ENCODE measurements at regions of chr22 and their contacts with region 1.

Region 1: GRCh38 chr22:46542011-46542985 is 4.9 kb upstream of the CELSR1 start:
- DNase-seq: peak; percentile 72 to 81 (median 76)
- ATAC-seq: peak; percentile 90
- H3K4me3 ChIP-seq: no peak overlapping the region
- H3K27ac ChIP-seq: no peak overlapping the region
- H3K4me1 ChIP-seq: peaks cover 29% of the 10 kb centered on the region
- H3K27me3 ChIP-seq: peaks cover 0 to 11% of the 10 kb centered on the region in 2 donors
- CTCF ChIP-seq: peak; percentile 87 to 92 (median 89)
- POLR2A ChIP-seq: no peak

Region 2: GRCh38 chr22:45994491-45995404 is 547.5 kb before region 1 on chr22:
- intact Hi-C with region 1: loop called (anchors 10 kb)
- DNase-seq: peak; percentile 82 to 87 (median 84)
- ATAC-seq: peak; percentile 73
- H3K4me3 ChIP-seq: no peak overlapping the region
- H3K27ac ChIP-seq: no peak overlapping the region
- H3K4me1 ChIP-seq: peaks cover 24% of the 10 kb centered on the region
- H3K27me3 ChIP-seq: no peaks in the 10 kb centered on the region
- CTCF ChIP-seq: peak; percentile 94 to 97 (median 95)
- POLR2A ChIP-seq: no peak

Region 3: DNA sequence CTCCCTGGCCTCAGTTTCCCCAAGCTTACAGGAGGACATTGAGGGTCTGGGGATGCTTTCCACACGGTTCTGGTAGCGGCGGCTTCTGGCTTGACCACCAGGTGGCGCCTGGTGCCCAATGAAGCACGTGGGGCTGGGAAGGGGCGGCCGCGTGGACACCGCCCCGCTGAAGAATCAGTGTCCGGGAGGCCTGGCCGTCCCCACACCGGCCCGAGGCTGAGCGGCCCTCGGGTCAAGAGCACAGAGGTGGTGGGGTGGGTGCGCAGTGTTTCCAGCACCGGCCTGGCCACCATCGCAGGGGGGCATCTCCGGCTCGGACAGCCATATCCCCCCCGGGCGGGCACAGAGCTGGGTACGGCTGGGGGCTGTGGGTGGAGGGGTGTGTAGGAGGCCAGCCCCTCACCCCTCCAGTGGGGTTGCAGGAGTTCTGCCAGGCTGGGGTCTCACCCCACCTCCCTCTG is 419.8 kb before region 1 on chr22:
- intact Hi-C with region 1: loop called (anchors 10 kb)
- DNase-seq: peak; percentile 71 to 80 (median 77)
- ATAC-seq: peak; percentile 63
- H3K4me3 ChIP-seq: no peak overlapping the region
- H3K27ac ChIP-seq: no peak overlapping the region
- H3K4me1 ChIP-seq: peaks cover 10% of the 10 kb centered on the region
- H3K27me3 ChIP-seq: no peaks in the 10 kb centered on the region
- CTCF ChIP-seq: peak; percentile 84 to 95 (median 90)
- POLR2A ChIP-seq: no peak

Region 4: DNA sequence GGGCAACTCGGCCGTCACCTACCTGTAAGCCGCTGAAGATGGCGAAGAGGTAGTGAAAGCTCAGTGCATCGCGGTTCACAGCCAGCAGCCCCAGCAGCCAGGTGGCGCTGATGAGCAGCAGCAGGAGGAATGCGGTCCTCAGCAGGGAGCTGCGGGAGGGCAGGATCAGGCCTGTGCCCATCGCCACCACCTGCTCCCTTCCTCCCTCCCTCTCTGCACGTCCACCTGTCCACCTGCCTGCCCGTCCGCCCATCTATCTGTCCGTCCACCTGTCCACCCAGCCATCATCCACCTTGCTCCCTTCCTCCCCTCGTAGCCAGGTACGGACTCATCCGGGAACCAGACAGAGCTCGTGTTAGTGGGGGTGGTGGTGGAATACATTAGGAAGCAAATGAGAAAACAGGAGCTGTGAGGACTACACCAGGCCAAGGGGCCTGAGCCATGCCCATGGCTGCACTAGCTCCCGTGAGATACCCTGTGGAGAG is 174.5 kb before region 1 on chr22:
- intact Hi-C with region 1: loop called (anchors 5 kb)
- DNase-seq: peak; percentile 83 to 90 (median 88)
- ATAC-seq: peak; percentile 89
- H3K4me3 ChIP-seq: no peak overlapping the region
- H3K27ac ChIP-seq: no peak overlapping the region
- H3K4me1 ChIP-seq: peaks cover 14% of the 10 kb centered on the region
- H3K27me3 ChIP-seq: no peaks in the 10 kb centered on the region
- CTCF ChIP-seq: peak; percentile 83 to 98 (median 95)
- POLR2A ChIP-seq: no peak

Region 5: GRCh38 chr22:46390652-46391301 is 151.5 kb before region 1 on chr22:
- intact Hi-C with region 1: loop called (anchors 10 kb)
- DNase-seq: peak; percentile 90 to 93 (median 91)
- ATAC-seq: peak; percentile 94
- H3K4me3 ChIP-seq: no peak overlapping the region
- H3K27ac ChIP-seq: peak overlapping the region; percentile 55 to 82 (median 79)
- H3K4me1 ChIP-seq: peaks cover 11% of the 10 kb centered on the region
- H3K27me3 ChIP-seq: no peaks in the 10 kb centered on the region
- CTCF ChIP-seq: peak; percentile 53 to 98 (median 67)
- POLR2A ChIP-seq: peak in 2 of 3 donors; percentile 25 to 49